ENCODE measurements at regions of chr12 and their contacts with region 1.

Region 1: GRCh38 chr12:66144791-66145754 is 14.5 kb upstream of the LLPH start:
- DNase-seq: no peak
- ATAC-seq: peak; percentile 88
- H3K4me3 Mint-ChIP-seq: no peak overlapping the region
- H3K27ac Mint-ChIP-seq: peak overlapping the region; percentile 75; the same call in 1 of the 2 replicates
- H3K4me1 Mint-ChIP-seq: peaks cover 16% of the 10 kb centered on the region
- H3K27me3 Mint-ChIP-seq: no peaks in the 10 kb centered on the region; the same call in 1 of the 2 replicates
- CTCF ChIP-seq: peak; percentile 52; the same call in 1 of the 2 replicates

Region 2: DNA sequence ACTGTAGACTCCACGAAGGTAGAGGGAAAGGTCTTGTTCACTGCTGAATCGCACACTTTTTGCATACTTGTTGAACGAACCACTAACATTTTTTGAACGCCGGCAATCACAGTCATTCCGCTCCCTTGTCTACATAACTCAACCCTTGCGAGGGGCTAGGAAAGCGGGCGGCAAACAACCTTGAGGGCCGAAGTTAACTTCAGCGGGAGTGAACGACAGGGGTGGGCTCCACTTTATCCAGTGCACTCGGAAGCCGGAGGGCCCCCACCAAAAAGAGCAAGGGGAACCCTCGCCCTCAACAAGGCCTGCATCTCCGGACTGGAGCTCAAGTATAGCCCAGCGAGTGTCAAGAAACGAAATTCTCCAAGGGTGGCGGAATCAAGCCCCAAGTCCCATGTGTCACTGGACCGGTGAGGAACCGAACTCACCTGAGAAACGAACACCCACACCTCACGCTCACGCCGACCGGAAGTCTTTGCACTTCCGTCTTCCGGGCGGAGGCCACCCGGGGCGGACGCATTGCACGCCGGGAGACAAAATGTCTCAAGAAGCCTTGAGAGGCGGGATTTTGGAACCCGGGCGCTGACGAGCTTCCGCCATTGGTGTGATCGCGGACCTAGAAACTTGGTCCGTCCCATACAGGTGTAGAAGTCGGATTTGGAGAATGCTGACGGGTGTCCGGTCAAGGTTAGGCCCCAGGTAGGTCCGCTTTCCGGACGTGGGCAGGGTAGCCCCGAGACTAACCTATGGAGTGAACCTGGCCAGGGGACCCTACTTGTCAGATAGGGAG is 14.6 kb before region 1 on chr12 and contains the start of gene LLPH:
- CTCF ChIA-PET with region 1: interaction called, 13 read pairs
- POLR2A ChIA-PET with region 1: interaction called, 4 read pairs
- DNase-seq: peak; percentile 86
- ATAC-seq: peak; percentile 90
- H3K4me3 Mint-ChIP-seq: peak within 1 kb of the TSS; percentile 98
- H3K27ac Mint-ChIP-seq: peak within 1 kb of the TSS; percentile 25
- H3K4me1 Mint-ChIP-seq: peaks cover 31% of the 10 kb centered on the region
- H3K27me3 Mint-ChIP-seq: no peaks in the 10 kb centered on the region
- CTCF ChIP-seq: no peak
- total RNA-seq, gene LLPH: 26.5 to 31.5 TPM (median 29.7 TPM) in 3 replicates

Region 3: DNA sequence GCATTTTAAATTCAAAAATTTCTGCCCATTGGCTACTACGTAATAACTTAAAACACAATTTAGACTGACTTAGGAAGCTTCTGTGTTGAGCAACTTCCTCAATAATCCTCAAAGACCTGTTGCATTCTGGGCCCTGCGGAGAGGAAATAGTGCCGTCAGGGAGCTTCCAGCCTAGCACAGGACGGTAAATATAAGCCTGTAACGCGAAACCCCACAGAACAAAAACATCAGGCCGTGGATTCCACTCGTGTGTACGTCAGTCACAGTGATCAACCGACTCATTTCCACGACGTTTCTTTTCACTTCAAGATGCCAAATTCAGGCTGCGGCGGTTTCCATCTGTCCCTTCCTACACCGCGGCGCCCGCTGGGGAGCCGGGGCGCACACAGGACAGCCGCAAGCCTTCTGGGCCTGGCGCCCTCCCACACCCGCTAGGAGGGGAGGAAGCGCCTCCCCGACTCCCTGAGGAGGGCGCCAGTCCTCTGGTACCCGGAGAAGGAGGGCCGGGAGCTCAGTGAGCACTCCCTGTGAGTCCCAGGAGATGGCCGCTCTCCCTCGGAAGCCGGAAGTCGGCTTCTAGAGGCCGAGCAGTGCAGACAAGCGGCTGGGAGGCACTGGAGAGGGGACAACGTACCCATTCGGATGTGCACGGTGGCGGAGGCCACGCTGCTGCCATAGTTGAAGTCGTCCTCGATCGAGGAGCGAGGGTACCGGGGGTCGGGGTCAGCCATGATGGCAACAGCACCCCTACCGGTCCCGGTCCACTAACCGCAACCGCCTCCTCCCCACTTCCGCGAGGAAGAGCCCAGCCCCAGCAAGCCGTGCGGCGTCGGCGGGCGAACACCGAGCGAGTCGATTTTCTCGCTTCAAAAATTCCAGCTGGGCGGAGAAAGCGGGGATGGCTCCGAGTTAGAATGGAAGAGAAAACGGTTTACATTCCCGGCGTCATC is 24.4 kb after region 1 on chr12 and contains the start of gene TMBIM4:
- CTCF ChIA-PET with region 1: interaction called, 13 read pairs
- POLR2A ChIA-PET with region 1: no interaction called
- DNase-seq: peak; percentile 81
- ATAC-seq: peak; percentile 99
- H3K4me3 Mint-ChIP-seq: peak within 1 kb of the TSS; percentile 94
- H3K27ac Mint-ChIP-seq: peak within 1 kb of the TSS; percentile 99
- H3K4me1 Mint-ChIP-seq: peaks cover 11% of the 10 kb centered on the region
- H3K27me3 Mint-ChIP-seq: no peaks in the 10 kb centered on the region
- CTCF ChIP-seq: no peak
- total RNA-seq, gene TMBIM4: 29.8 to 41.9 TPM (median 37.8 TPM) in 3 replicates

Region 4: GRCh38 chr12:66182956-66183355 is 37.9 kb after region 1 on chr12:
- CTCF ChIA-PET with region 1: no interaction called
- POLR2A ChIA-PET with region 1: no interaction called
- DNase-seq: no peak
- ATAC-seq: no peak
- H3K4me3 Mint-ChIP-seq: no peak overlapping the region
- H3K27ac Mint-ChIP-seq: no peak overlapping the region
- H3K4me1 Mint-ChIP-seq: no peaks in the 10 kb centered on the region
- H3K27me3 Mint-ChIP-seq: peaks cover 47% of the 10 kb centered on the region
- CTCF ChIP-seq: no peak